PC-3 (cell line): ENCODE measurements at regions of chr2 and their contacts with region 1.

Region 1: GRCh38 chr2:113720167-113720566 is 36.3 kb downstream of the SLC35F5 start:
- DNase-seq: peak; percentile 66
- ATAC-seq: peak; percentile 77
- H3K4me3 ChIP-seq: no peak overlapping the region
- H3K27ac ChIP-seq: no peak overlapping the region
- H3K4me1 ChIP-seq: peaks cover 4% of the 10 kb centered on the region; the same call in 1 of the 2 replicates
- H3K27me3 ChIP-seq: no peaks in the 10 kb centered on the region
- CTCF ChIP-seq: peak; percentile 75

Region 2: GRCh38 chr2:112972423-112973086 is 747.6 kb before region 1 on chr2:
- CTCF ChIA-PET with region 1: no interaction called
- POLR2A ChIA-PET with region 1: no interaction called
- intact Hi-C with region 1: no loop called
- DNase-seq: peak; percentile 64
- ATAC-seq: peak; percentile 29; the same call in 1 of the 2 replicates
- H3K4me3 ChIP-seq: no peak overlapping the region
- H3K27ac ChIP-seq: peak overlapping the region; percentile 67
- H3K4me1 ChIP-seq: peaks cover 19% of the 10 kb centered on the region
- H3K27me3 ChIP-seq: no peaks in the 10 kb centered on the region
- CTCF ChIP-seq: no peak

Region 3: DNA sequence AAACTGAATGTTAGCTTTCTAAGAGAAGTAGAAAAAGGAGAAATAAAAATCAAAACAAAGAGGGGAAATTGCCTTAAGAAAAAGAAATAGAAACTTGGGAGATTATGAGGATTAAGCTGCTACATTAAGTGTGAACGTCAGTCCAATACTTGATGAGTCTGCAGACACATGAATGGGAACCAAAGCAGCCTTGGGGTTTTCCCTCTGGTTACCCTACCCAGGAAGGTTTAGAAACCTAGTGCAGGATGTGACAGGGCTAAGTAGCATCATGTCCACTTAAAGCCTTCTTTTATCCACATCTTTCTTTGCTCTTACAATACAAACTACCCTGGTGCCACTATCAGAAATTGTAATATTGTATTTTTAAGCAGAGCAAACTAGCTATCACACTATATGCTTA is 14.0 kb after region 1 on chr2:
- CTCF ChIA-PET with region 1: no interaction called
- POLR2A ChIA-PET with region 1: no interaction called
- intact Hi-C with region 1: loop called (anchors 1 kb)
- DNase-seq: no peak
- ATAC-seq: no peak
- H3K4me3 ChIP-seq: no peak overlapping the region
- H3K27ac ChIP-seq: no peak overlapping the region
- H3K4me1 ChIP-seq: no peaks in the 10 kb centered on the region
- H3K27me3 ChIP-seq: no peaks in the 10 kb centered on the region
- CTCF ChIP-seq: no peak

Region 4: GRCh38 chr2:113854970-113855740 is 135.0 kb after region 1 on chr2:
- CTCF ChIA-PET with region 1: no interaction called
- POLR2A ChIA-PET with region 1: no interaction called
- intact Hi-C with region 1: no loop called
- DNase-seq: no peak
- ATAC-seq: no peak
- H3K4me3 ChIP-seq: no peak overlapping the region
- H3K27ac ChIP-seq: no peak overlapping the region
- H3K4me1 ChIP-seq: peaks cover 15% of the 10 kb centered on the region
- H3K27me3 ChIP-seq: no peaks in the 10 kb centered on the region
- CTCF ChIP-seq: no peak